Activated CD8-positive, alpha-beta T cell treated with anti-CD3 and anti-CD28 coated beads for 36 hours (primary cell): ENCODE measurements at regions of chr18 and their contacts with region 1.

Region 1: DNA sequence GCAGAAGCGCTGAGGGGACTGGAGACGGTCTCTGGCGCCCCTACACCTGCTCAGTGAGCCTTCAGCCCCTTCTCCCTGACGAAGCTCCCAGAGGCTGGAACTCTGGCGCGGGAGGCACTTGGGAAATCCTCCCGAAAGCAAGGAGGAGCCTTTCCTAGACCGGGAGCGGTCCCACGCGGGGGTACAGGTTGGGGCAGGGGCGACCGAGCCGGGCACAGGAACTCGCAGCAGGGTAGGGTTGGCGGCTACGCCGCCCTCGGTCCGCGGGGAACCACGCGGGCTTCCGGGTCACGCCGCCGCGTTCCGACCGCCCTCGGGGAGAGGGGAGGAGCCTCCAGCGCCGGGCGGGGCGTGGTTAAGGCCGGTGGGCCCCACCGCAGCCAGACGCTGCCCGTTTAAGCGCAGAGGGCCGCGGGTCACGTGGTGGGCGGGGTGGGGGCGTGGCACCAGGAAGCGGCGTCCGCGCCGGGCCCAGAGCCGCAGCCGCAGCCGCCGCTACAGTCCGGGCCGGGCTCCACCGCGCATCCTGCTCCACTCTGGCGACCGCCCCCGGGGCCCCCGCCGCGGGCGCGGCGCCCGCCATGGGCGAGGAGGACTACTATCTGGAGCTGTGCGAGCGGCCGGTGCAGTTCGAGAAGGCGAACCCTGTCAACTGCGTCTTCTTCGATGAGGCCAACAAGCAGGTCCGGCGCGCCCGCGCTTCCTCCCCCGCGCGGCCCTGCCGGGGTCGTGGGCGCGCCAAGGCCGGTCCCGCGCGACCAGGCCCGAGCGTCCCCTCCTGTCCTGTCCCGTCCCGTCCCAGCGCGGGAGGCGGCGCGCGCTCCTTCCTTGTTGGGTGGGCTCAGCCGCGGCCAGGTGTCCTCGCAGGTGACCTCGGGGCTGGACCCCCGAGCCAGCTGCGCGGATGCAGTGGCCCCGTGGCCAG is at the start of gene RMC1:
- DNase-seq: peak; percentile 97
- ATAC-seq: peak; percentile 94
- H3K4me3 Mint-ChIP-seq: peak within 1 kb of the TSS; percentile 97
- H3K27ac Mint-ChIP-seq: peak within 1 kb of the TSS; percentile 89
- H3K4me1 Mint-ChIP-seq: peaks cover 36% of the 10 kb centered on the region
- H3K27me3 Mint-ChIP-seq: no peaks in the 10 kb centered on the region
- CTCF ChIP-seq: no peak
- total RNA-seq, gene RMC1: 26.1 to 28.5 TPM

Region 2: DNA sequence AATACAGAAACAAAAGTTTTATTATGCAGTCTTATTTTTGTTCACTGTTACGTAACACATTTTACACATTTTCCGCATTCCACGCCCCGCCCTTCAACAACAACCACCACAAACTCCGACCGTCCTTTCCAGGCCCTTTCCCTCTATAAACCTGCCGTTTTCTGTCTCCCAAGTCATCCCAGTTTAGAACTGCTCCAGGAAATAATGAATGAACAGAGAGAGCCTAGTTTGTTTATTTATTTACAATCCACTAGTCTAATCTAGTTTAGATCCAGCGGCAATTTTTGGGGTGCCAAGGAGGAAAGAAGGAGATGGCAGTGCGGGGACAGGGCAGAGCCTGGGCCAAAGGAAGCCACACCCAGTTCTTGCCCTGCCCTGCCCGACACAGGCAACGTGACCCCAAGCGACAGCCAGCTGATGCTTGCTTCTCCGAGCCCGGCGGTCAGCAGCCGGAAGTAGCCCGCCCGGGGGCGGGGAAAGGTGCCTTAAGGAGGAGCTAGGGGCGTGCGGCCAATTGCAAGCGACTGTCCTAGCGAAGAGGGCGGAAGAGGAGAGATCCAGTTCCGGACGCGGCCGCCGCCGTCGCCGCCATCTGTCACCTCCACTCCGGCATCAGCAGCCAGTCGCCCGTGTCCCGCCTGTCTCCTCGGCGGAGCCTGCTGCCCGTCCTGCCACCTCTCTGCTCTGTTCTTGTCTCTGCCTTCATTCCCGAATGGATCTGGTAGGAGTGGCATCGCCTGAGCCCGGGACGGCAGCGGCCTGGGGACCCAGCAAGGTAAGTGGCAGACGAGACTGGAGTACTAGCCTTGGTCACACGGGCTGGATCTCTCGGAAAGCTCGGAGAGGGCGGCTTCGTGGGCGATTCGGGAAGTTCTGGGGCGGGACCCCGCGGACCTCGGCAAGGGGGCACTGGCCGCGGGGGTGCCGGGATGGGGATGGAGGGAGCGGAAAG is 50.3 kb before region 1 on chr18 and contains the start of gene RIOK3:
- CTCF ChIA-PET with region 1: interaction called, 13 read pairs
- POLR2A ChIA-PET with region 1: interaction called, 7 read pairs
- intact Hi-C with region 1: no loop called
- DNase-seq: peak; percentile 96
- ATAC-seq: peak; percentile 98
- H3K4me3 Mint-ChIP-seq: peak within 1 kb of the TSS; percentile 98
- H3K27ac Mint-ChIP-seq: peak within 1 kb of the TSS; percentile 93
- H3K4me1 Mint-ChIP-seq: peaks cover 41% of the 10 kb centered on the region
- H3K27me3 Mint-ChIP-seq: no peaks in the 10 kb centered on the region
- CTCF ChIP-seq: no peak
- total RNA-seq, gene RIOK3: 74.7 to 81.3 TPM

Region 3: GRCh38 chr18:23479829-23480505 is 23.3 kb before region 1 on chr18:
- CTCF ChIA-PET with region 1: interaction called, 21 read pairs
- POLR2A ChIA-PET with region 1: no interaction called
- intact Hi-C with region 1: no loop called
- DNase-seq: no peak
- ATAC-seq: no peak
- H3K4me3 Mint-ChIP-seq: no peak overlapping the region
- H3K27ac Mint-ChIP-seq: peak overlapping the region; percentile 42
- H3K4me1 Mint-ChIP-seq: no peaks in the 10 kb centered on the region
- H3K27me3 Mint-ChIP-seq: no peaks in the 10 kb centered on the region
- CTCF ChIP-seq: no peak

Region 4: DNA sequence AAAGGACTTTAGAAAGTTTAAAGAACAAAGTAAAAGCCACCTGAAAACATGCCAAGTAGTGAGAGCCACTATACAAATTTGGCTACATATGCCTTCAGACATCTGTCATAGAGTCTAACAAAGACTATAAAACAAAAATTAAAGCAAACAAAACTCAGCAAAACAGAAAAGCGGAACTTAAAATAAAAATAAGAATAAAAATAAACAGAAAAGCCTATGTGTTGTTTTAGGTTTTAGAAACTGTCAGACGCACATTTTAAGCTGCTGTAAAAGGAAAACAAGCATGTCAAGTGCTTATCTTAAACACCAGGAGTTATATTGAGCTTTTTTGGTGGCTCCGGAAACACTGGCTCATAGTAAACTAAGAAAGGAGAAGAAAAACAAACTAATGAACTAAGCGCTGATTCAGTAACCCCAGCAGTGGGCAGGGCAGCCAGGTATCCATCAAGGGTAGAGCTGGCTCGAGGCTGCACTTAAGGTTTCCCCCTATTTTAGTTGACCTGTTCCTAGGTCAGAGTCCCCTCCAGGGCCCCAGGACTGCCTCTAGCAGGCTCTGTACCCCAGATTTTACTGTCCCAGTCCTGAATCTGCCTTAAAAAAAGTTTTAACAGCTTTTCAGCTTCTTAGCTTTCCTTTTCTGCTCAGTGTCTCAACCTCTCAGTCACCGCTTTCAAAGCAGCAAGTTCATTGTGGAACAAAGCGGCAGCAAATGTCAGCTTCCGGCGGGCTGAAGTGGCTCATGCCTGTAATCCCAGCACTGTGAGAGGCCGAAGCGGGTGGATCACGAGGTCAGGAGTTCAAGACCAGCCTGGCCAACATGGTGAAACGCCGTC is 15.3 kb before region 1 on chr18:
- CTCF ChIA-PET with region 1: interaction called, 51 read pairs
- POLR2A ChIA-PET with region 1: interaction called, 11 read pairs
- intact Hi-C with region 1: no loop called
- DNase-seq: peak; percentile 78
- ATAC-seq: peak; percentile 87
- H3K4me3 Mint-ChIP-seq: peak overlapping the region; percentile 65
- H3K27ac Mint-ChIP-seq: peak overlapping the region; percentile 90
- H3K4me1 Mint-ChIP-seq: peaks cover 19% of the 10 kb centered on the region
- H3K27me3 Mint-ChIP-seq: no peaks in the 10 kb centered on the region
- CTCF ChIP-seq: no peak

Region 5: GRCh38 chr18:23586249-23587196 is 83.2 kb after region 1 on chr18 and contains the start of gene NPC1:
- CTCF ChIA-PET with region 1: interaction called, 12 read pairs
- POLR2A ChIA-PET with region 1: interaction called, 7 read pairs
- intact Hi-C with region 1: loop called (anchors 5 kb)
- DNase-seq: peak; percentile 91
- ATAC-seq: peak; percentile 93
- H3K4me3 Mint-ChIP-seq: peak within 1 kb of the TSS; percentile 94
- H3K27ac Mint-ChIP-seq: peak within 1 kb of the TSS; percentile 94
- H3K4me1 Mint-ChIP-seq: peaks cover 35% of the 10 kb centered on the region
- H3K27me3 Mint-ChIP-seq: no peaks in the 10 kb centered on the region
- CTCF ChIP-seq: peak; percentile 93
- total RNA-seq, gene NPC1: 21.5 to 22.9 TPM

Region 6: GRCh38 chr18:23703057-23703986 is 200.0 kb after region 1 on chr18:
- CTCF ChIA-PET with region 1: interaction called, 18 read pairs
- POLR2A ChIA-PET with region 1: no interaction called
- intact Hi-C with region 1: no loop called
- DNase-seq: peak; percentile 15
- ATAC-seq: peak; percentile 68
- H3K4me3 Mint-ChIP-seq: no peak overlapping the region
- H3K27ac Mint-ChIP-seq: no peak overlapping the region
- H3K4me1 Mint-ChIP-seq: no peaks in the 10 kb centered on the region
- H3K27me3 Mint-ChIP-seq: peaks cover 15% of the 10 kb centered on the region
- CTCF ChIP-seq: peak; percentile 52